ENCODE measurements at regions of chr13 and their contacts with region 1.

Region 1: GRCh38 chr13:100658363-100658762 is 16.2 kb downstream of the TMTC4 start:
- DNase-seq: no peak
- H3K4me3 ChIP-seq: no peak overlapping the region
- H3K27me3 ChIP-seq: no peaks in the 10 kb centered on the region
- CTCF ChIP-seq: no peak

Region 2: GRCh38 chr13:100633461-100633860 is 24.9 kb before region 1 on chr13:
- CTCF ChIA-PET with region 1: no interaction called
- POLR2A ChIA-PET with region 1: no interaction called
- DNase-seq: peak; percentile 66
- H3K4me3 ChIP-seq: no peak overlapping the region
- H3K27me3 ChIP-seq: no peaks in the 10 kb centered on the region
- CTCF ChIP-seq: no peak

Region 3: DNA sequence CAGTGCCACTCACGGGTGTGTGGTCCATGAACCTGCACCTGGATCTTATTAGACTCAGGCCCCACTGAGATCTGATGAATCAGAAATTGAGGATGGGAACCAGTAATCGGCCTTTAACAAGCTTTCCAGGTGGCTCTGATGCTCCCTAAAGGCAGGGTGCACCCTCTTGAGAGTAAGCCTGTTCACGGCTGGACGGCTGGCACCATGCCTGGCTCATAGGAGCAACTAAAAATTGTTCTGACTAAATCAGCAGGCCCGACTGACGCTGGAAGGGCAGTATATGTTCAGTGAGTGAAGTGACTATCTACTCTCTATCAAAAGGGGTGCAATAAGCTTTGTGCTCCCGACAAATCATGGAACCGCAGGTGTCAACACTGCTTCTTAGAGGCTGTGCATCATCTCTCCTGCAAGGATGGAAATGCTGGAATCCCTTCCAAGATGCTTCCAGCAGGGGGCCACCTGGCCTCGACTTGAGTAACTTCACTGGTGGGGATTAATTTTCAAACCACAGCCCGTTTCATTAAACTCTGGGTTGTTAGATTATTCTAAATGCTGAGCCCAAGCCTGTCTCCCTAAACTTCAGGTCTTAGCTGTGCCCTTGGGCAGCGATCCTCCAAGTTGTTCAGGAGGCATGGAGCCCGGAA is 12.2 kb before region 1 on chr13:
- CTCF ChIA-PET with region 1: interaction called, 11 read pairs
- POLR2A ChIA-PET with region 1: interaction called, 7 read pairs
- DNase-seq: no peak
- H3K4me3 ChIP-seq: no peak overlapping the region
- H3K27me3 ChIP-seq: no peaks in the 10 kb centered on the region
- CTCF ChIP-seq: peak; percentile 62

Region 4: DNA sequence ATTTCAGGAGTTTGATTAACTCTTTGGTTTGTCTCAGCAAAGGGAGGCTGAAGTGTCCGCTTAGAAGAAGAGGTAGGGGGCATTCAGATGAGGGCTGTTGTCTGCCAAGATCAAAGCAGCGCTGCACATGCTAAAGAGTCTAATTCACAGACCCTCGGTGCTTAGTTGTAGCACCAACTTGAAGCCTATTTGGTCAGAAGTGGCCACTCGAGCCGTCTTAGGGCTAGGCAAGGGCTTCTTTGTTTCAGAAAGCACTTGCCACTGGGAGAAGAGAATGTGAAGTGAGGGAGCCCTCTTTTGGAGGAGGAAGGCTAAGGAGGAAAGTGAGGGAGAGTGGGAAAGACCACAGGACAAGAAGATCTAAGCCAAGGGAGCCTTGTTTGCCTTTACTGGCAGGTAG is 329.6 kb after region 1 on chr13:
- CTCF ChIA-PET with region 1: no interaction called
- POLR2A ChIA-PET with region 1: no interaction called
- DNase-seq: no peak
- H3K4me3 ChIP-seq: no peak overlapping the region
- H3K27me3 ChIP-seq: no peaks in the 10 kb centered on the region
- CTCF ChIP-seq: peak; percentile 25; the same call in 1 of the 2 replicates